HepG2 (cell line): ENCODE measurements at regions of chr11 and their contacts with region 1.

Region 1: GRCh38 chr11:76380967-76381719 is at the starts of genes GVQW3 and THAP12:
- DNase-seq: peak; percentile 92
- ATAC-seq: peak; percentile 91
- H3K4me3 ChIP-seq: peak within 1 kb of the TSS; percentile 70 to 85 (median 73)
- H3K27ac ChIP-seq: peak within 1 kb of the TSS; percentile 65
- H3K4me1 ChIP-seq: peaks cover 56% of the 10 kb centered on the region
- H3K27me3 ChIP-seq: no peaks in the 10 kb centered on the region; a peak in 1 of 5 replicates
- CTCF ChIP-seq: peak; percentile 73
- EP300 ChIP-seq: no peak
- POLR2A ChIP-seq: peak; percentile 63 to 86
- RAD21 ChIP-seq: peak; percentile 64; the same call in 1 of the 2 replicates
- total RNA-seq, gene GVQW3: 2.9 and 5.6 TPM in 2 replicates
- total RNA-seq, gene THAP12: 51.3 and 74.3 TPM in 2 replicates

Region 2: GRCh38 chr11:76235233-76236091 is 145.7 kb before region 1 on chr11:
- CTCF ChIA-PET with region 1: no interaction called
- POLR2A ChIA-PET with region 1: no interaction called
- in situ Hi-C with region 1: no loop called
- intact Hi-C with region 1: loop called (anchors 5 kb)
- DNase-seq: peak; percentile 86
- ATAC-seq: peak; percentile 78
- H3K4me3 ChIP-seq: peak overlapping the region; percentile 82 to 90 (median 88)
- H3K27ac ChIP-seq: peak overlapping the region; percentile 48
- H3K4me1 ChIP-seq: peaks cover 69% of the 10 kb centered on the region
- H3K27me3 ChIP-seq: peaks cover 1 to 9% of the 10 kb centered on the region in 2 experiments; a peak in 3 of 5 replicates
- CTCF ChIP-seq: no peak; the same call in 1 of the 2 replicates
- EP300 ChIP-seq: no peak
- POLR2A ChIP-seq: peak; percentile 62 to 63; a peak in 3 of 4 replicates
- RAD21 ChIP-seq: no peak

Region 3: DNA sequence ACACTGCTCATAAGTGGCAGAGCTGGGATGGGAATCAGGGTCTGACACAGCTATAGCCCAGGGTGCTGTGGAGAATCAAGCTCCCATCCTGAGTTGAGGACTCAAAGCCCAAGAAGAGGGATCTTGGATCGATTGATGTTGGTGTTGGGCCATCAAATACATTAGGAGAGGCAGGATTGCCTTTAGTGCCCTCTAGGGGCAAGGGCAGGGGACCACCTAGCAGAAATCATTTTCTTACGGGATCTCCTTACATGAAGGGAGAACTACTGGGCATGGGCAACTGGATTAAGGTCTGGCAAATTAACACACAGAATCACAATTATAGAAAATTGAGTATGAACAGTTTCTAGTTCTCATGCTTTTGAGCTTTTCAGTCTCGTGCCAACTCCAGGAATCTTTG is 38.8 kb after region 1 on chr11:
- CTCF ChIA-PET with region 1: no interaction called
- POLR2A ChIA-PET with region 1: no interaction called
- in situ Hi-C with region 1: no loop called
- intact Hi-C with region 1: loop called (anchors 5 kb)
- DNase-seq: peak; percentile 15
- ATAC-seq: peak; percentile 67
- H3K4me3 ChIP-seq: no peak overlapping the region
- H3K27ac ChIP-seq: no peak overlapping the region
- H3K4me1 ChIP-seq: no peaks in the 10 kb centered on the region
- H3K27me3 ChIP-seq: peaks cover 1 to 11% of the 10 kb centered on the region in 2 experiments; a peak in 1 of 5 replicates
- CTCF ChIP-seq: peak; percentile 64
- EP300 ChIP-seq: no peak
- POLR2A ChIP-seq: no peak
- RAD21 ChIP-seq: no peak; the same call in 1 of the 2 replicates

Region 4: GRCh38 chr11:76444384-76445123 is 63.4 kb after region 1 on chr11 and contains the start of gene EMSY:
- CTCF ChIA-PET with region 1: no interaction called
- POLR2A ChIA-PET with region 1: interaction called, 5 read pairs
- in situ Hi-C with region 1: no loop called
- intact Hi-C with region 1: loop called (anchors 2 kb)
- DNase-seq: peak; percentile 99
- ATAC-seq: peak; percentile 96
- H3K4me3 ChIP-seq: peak within 1 kb of the TSS; percentile 90 to 93 (median 92)
- H3K27ac ChIP-seq: peak within 1 kb of the TSS; percentile 92
- H3K4me1 ChIP-seq: peaks cover 23% of the 10 kb centered on the region
- H3K27me3 ChIP-seq: no peaks in the 10 kb centered on the region; a peak in 1 of 5 replicates
- CTCF ChIP-seq: no peak
- EP300 ChIP-seq: peak; percentile 16 to 29; a peak in 1 of 4 replicates
- POLR2A ChIP-seq: peak; percentile 96 to 99
- RAD21 ChIP-seq: peak; percentile 31; the same call in 1 of the 2 replicates
- total RNA-seq, gene EMSY: 10.6 and 11.6 TPM in 2 replicates